ENCODE measurements at regions of chr1 and their contacts with region 1.

Region 1: GRCh38 chr1:54764133-54764921 is at the start of gene PARS2:
- H3K4me3 Mint-ChIP-seq: peak within 1 kb of the TSS; percentile 97
- H3K27ac Mint-ChIP-seq: peak within 1 kb of the TSS; percentile 90
- H3K4me1 Mint-ChIP-seq: peaks cover 17% of the 10 kb centered on the region
- H3K27me3 Mint-ChIP-seq: peaks cover 2% of the 10 kb centered on the region

Region 2: DNA sequence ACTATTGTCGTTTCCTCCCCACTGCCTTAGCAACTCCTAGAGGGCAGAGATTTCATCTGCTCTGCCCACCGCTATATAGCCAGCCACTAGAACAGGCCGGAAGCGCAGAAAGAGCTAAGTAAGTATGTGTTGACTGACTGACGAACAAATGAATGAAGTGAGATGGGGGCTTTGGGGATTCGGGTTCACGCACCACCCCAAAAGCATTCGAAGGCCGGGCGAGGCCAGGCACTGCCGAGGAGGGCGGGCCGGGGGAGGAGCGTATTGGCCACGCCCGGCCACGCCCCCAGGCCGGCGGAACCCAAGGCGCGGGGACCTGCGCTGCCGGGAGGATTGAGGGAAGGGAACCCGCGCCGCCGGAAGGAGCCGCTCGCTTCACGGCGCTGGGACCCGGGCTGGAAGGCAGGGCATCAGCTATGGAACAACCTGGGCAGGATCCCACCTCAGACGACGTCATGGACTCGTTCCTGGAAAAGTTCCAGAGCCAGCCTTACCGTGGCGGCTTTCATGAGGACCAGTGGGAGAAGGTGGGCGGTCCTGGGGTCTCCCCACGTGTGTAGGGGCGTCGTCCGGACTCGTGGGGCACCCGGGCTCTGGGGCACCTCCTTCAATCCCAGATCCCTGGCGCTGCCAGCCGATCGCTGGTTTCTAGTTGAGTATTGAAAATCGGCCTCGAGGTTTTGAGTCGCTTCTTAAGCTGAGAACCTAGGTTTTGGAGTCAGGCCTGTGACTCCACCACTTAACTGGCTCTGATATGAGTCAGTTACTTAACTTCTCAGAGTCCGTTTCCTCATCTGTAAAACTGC is 48.6 kb before region 1 on chr1 and contains the start of gene TTC4:
- intact Hi-C with region 1: loop called (anchors 1 kb)
- H3K4me3 Mint-ChIP-seq: peak within 1 kb of the TSS; percentile 89
- H3K27ac Mint-ChIP-seq: peak within 1 kb of the TSS; percentile 85
- H3K4me1 Mint-ChIP-seq: peaks cover 27% of the 10 kb centered on the region
- H3K27me3 Mint-ChIP-seq: peaks cover 2% of the 10 kb centered on the region

Region 3: DNA sequence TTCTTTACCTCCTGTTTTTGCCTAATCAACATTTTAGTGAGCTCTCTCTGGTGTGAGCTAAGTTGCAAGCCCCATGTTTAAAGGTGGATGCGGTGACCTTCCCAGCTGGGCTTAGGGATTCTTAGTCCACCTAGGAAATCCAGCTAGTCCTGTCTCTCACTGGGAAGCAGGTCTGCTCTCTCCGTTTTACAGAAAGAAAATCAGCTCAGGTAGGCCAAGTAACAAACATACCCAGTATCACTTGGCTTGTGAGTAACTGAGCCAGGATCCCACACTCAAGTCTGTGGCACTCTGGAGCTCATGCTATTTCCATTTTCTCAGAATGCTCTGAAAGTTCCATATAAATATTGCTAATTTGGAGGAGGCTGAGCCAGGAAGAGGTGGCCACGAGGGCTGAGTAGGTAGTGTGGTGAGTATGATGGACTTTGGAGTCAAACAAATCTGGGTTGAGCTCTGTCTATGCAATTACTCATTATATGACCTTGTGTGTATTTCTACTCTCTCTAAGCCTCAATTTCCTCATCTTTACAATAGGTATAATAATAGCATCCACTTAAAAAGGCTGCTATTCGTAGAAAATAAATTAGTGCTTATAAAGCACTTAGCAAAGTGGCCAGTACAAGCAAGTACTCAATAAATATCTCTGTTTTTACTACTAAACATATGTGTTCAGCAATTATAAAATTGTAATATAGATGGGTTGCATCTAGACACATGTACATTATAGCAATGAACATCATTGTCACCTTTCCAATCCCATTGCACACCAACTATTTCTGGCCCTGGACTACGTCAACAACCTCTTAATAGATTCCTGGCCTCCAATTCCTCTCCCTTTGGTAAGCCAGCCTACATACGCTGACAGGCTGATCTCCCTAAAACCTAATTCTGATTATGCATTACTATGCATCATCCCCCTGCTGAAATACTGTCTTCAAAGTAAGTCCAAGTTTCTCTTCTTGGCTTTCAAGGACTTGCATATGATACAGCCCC is 155.3 kb after region 1 on chr1:
- intact Hi-C with region 1: no loop called
- H3K4me3 Mint-ChIP-seq: no peak overlapping the region
- H3K27ac Mint-ChIP-seq: no peak overlapping the region
- H3K4me1 Mint-ChIP-seq: no peaks in the 10 kb centered on the region
- H3K27me3 Mint-ChIP-seq: peaks cover 14% of the 10 kb centered on the region